H1 (cell line): ENCODE measurements at regions of chr1 and their contacts with region 1.

Region 1: GRCh38 chr1:200542162-200542561 is 78.4 kb downstream of the KIF14 start:
- DNase-seq: no peak
- H3K4me3 ChIP-seq: no peak overlapping the region
- H3K27ac ChIP-seq: no peak overlapping the region
- H3K4me1 ChIP-seq: peaks cover 0 to 2% (median 0%) of the 10 kb centered on the region in 4 experiments; a peak in 2 of 7 replicates
- H3K27me3 ChIP-seq: no peaks in the 10 kb centered on the region
- CTCF ChIP-seq: no peak
- EP300 ChIP-seq: no peak
- POLR2A ChIP-seq: no peak
- RAD21 ChIP-seq: no peak

Region 2: GRCh38 chr1:200526709-200527612 is 15.2 kb before region 1 on chr1:
- CTCF ChIA-PET with region 1: interaction called, 23 read pairs
- POLR2A ChIA-PET with region 1: no interaction called
- DNase-seq: no peak
- H3K4me3 ChIP-seq: no peak overlapping the region
- H3K27ac ChIP-seq: no peak overlapping the region
- H3K4me1 ChIP-seq: peaks cover 0 to 5% (median 3%) of the 10 kb centered on the region in 4 experiments; a peak in 3 of 7 replicates
- H3K27me3 ChIP-seq: no peaks in the 10 kb centered on the region
- CTCF ChIP-seq: no peak
- EP300 ChIP-seq: no peak
- POLR2A ChIP-seq: no peak
- RAD21 ChIP-seq: no peak

Region 3: DNA sequence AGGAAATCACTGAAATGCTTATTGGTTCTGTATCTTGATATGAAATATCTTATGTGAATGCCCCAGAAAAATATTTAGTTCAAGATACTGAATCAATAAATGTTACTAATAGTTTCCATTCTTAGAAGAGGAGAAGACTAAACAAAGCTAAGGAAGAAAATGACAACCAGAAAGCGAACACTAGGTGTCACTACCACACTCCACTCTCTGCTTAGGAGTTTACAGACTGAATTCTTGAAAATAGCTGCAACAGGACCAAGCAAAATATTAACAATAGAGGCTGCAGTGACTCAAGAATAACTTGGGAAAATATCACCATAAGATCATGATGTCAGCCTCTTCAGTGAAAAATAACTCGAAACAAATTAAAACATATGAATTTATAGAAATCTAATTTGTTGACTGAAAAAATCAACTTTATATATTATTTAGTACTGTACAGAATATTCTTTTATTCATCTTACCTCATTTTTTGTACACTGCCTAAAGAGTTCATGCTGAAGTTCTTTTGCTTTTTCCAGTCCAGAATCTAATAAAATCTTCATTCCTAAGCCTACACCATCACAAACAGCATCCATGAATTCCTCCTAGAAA is 16.8 kb after region 1 on chr1:
- CTCF ChIA-PET with region 1: interaction called, 36 read pairs
- POLR2A ChIA-PET with region 1: no interaction called
- DNase-seq: no peak
- H3K4me3 ChIP-seq: no peak overlapping the region
- H3K27ac ChIP-seq: no peak overlapping the region
- H3K4me1 ChIP-seq: peaks cover 0 to 4% (median 1%) of the 10 kb centered on the region in 4 experiments; a peak in 2 of 7 replicates
- H3K27me3 ChIP-seq: no peaks in the 10 kb centered on the region
- CTCF ChIP-seq: peak in 2 of 3 experiments; percentile 49 to 69; a peak in 2 of 4 replicates
- EP300 ChIP-seq: no peak
- POLR2A ChIP-seq: no peak
- RAD21 ChIP-seq: peak; percentile 62 to 66

Region 4: GRCh38 chr1:200673952-200674823 is 132.0 kb after region 1 on chr1:
- CTCF ChIA-PET with region 1: no interaction called
- POLR2A ChIA-PET with region 1: no interaction called
- DNase-seq: no peak
- H3K4me3 ChIP-seq: no peak overlapping the region
- H3K27ac ChIP-seq: no peak overlapping the region
- H3K4me1 ChIP-seq: no peaks in the 10 kb centered on the region; a peak in 1 of 7 replicates
- H3K27me3 ChIP-seq: no peaks in the 10 kb centered on the region
- CTCF ChIP-seq: no peak
- EP300 ChIP-seq: no peak
- POLR2A ChIP-seq: no peak
- RAD21 ChIP-seq: no peak